ENCODE measurements at regions of chr5 and their contacts with region 1.

Region 1: GRCh38 chr5:126988021-126988569 is 42.3 kb downstream of the MARCHF3 start:
- DNase-seq: peak; percentile 31
- H3K4me3 Mint-ChIP-seq: peak overlapping the region; percentile 28
- H3K27ac Mint-ChIP-seq: peak overlapping the region; percentile 86
- H3K4me1 Mint-ChIP-seq: peaks cover 28% of the 10 kb centered on the region
- H3K27me3 Mint-ChIP-seq: no peaks in the 10 kb centered on the region

Region 2: DNA sequence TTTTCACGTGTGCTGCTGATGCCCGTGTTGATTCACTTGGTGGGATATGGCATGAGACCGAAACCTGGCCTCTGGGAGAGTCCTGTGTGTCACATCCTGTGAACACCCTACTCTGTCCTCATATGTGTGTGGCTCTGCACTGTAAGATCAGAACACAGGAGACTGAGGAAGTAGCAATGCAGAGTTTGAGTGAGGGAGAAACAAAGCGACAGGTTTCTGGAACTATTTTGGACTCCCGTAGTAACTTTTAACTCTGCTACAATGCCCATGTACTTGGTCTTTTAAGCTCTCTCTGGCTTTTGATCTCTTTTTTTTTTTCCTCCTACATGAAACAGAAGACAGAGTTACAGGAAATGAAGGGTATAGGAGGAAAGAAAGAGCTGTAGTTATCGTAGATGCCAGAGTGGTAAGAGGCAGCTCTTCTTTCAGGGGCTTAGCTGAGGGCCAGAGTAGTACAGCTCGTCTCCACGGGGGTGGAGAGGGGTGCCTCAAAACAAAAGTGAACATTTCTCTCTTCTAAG is 538.3 kb before region 1 on chr5:
- intact Hi-C with region 1: loop called (anchors 5 kb)
- DNase-seq: peak; percentile 60
- H3K4me3 Mint-ChIP-seq: peak overlapping the region; percentile 85
- H3K27ac Mint-ChIP-seq: peak overlapping the region; percentile 100
- H3K4me1 Mint-ChIP-seq: peaks cover 67% of the 10 kb centered on the region
- H3K27me3 Mint-ChIP-seq: no peaks in the 10 kb centered on the region

Region 3: GRCh38 chr5:126811515-126812198 is 176.4 kb before region 1 on chr5:
- intact Hi-C with region 1: loop called (anchors 2 kb)
- DNase-seq: peak; percentile 50
- H3K4me3 Mint-ChIP-seq: peak overlapping the region; percentile 81
- H3K27ac Mint-ChIP-seq: peak overlapping the region; percentile 90
- H3K4me1 Mint-ChIP-seq: peaks cover 69% of the 10 kb centered on the region
- H3K27me3 Mint-ChIP-seq: no peaks in the 10 kb centered on the region

Region 4: DNA sequence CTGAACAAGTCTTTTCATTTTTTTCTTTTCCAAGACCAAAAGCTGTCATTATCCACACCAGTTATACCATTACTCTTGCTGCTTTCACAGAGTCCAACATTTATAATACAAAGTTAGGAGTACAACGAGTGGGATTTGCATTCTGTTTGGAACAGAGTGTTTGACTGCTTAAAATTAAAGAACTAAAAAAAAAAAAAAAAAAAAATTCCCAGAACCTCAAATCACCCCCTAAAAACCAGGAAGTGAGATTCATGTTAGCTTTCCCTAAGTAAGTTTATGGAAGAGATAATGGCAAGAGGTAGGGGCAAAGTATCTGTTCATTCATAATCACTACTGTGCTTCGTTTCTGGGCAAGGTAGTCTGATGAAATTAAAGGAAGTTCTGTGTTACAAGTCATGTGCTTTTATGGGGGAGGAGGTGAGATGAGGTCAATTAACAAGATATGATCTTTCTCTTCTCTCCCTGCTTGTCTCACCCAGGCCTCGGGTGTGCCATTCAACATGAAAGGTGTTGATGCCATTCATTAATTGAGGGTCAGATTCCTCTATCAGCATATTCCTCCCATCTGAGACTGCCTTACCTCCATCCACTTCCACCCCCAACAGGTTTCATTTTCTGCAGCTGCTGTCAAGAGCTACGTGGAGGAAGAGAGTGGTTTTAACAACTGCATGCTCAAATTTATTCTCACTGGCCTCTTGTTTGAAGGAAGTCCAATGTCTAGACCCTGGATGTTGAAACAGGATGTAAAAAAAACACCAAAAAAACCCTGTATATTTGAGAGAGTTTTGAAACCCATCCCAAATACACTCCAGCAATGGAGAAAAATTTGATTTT is 15.8 kb before region 1 on chr5:
- intact Hi-C with region 1: loop called (anchors 1 kb)
- DNase-seq: peak; percentile 31
- H3K4me3 Mint-ChIP-seq: peak overlapping the region; percentile 58
- H3K27ac Mint-ChIP-seq: peak overlapping the region; percentile 90
- H3K4me1 Mint-ChIP-seq: peaks cover 47% of the 10 kb centered on the region
- H3K27me3 Mint-ChIP-seq: no peaks in the 10 kb centered on the region

Region 5: GRCh38 chr5:127030259-127031146 is 42.4 kb after region 1 on chr5 and contains the start of gene MARCHF3:
- intact Hi-C with region 1: loop called (anchors 1 kb)
- DNase-seq: peak; percentile 96
- H3K4me3 Mint-ChIP-seq: peak within 1 kb of the TSS; percentile 89
- H3K27ac Mint-ChIP-seq: peak within 1 kb of the TSS; percentile 69
- H3K4me1 Mint-ChIP-seq: peaks cover 30% of the 10 kb centered on the region
- H3K27me3 Mint-ChIP-seq: peaks cover 32% of the 10 kb centered on the region
- total RNA-seq, gene MARCHF3: 5.2 and 5.9 TPM in 2 replicates

Region 6: DNA sequence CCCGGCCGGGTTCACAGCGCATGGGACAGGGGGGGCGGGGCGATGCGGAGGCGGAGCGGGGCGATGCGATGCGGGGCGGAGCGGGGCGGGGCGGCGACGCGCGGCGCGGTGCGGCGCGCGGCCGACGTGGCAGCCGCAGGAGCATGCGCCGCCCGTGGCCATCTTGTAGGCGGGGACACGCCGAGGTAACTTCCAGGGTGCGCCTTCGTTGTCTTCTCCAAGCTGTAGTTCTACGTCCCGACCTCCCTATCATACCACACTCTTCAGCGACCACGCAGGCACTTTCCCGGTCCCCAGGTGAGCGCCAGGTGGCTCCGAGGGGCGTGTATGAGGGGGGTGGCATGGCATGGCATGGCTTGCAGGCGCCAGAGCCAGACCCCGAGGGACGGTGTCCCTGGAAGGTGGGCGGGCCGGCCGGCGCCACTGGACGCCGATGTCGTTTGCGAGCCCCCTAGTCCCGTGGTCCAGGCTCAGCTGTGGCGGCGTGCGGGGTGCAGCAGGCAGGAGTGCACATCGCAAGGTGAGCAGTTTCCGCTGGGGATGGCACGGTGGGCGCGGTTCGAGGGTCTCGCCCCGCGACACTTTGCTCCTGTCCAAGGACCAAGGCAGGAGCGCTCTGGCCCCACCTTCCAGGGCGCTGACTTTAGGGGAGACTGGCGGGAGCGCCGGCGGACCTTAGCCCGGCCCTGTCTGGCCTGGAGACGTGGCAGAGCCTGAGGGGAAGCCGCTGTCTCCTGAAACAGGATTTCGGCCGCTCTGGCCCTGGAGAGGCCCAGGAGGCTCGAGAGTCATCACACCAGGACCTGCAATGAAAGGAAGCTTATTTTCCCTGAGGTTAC is 529.6 kb after region 1 on chr5 and contains the start of gene PRRC1:
- intact Hi-C with region 1: loop called (anchors 5 kb)
- DNase-seq: peak; percentile 73
- H3K4me3 Mint-ChIP-seq: peak within 1 kb of the TSS; percentile 84
- H3K27ac Mint-ChIP-seq: peak within 1 kb of the TSS; percentile 59
- H3K4me1 Mint-ChIP-seq: peaks cover 26% of the 10 kb centered on the region
- H3K27me3 Mint-ChIP-seq: peaks cover 7% of the 10 kb centered on the region
- total RNA-seq, gene PRRC1: 52.9 and 59.7 TPM in 2 replicates